Calu3 (cell line): ENCODE measurements at regions of chr2 and their contacts with region 1.

Region 1: GRCh38 chr2:43611987-43612894 is 16.4 kb upstream of the THADA start:
- DNase-seq: peak; percentile 82
- H3K4me3 Mint-ChIP-seq: no peak overlapping the region
- H3K27ac Mint-ChIP-seq: peak overlapping the region; percentile 17
- H3K4me1 Mint-ChIP-seq: peaks cover 10% of the 10 kb centered on the region
- H3K27me3 Mint-ChIP-seq: no peaks in the 10 kb centered on the region
- CTCF ChIP-seq: peak; percentile 75

Region 2: DNA sequence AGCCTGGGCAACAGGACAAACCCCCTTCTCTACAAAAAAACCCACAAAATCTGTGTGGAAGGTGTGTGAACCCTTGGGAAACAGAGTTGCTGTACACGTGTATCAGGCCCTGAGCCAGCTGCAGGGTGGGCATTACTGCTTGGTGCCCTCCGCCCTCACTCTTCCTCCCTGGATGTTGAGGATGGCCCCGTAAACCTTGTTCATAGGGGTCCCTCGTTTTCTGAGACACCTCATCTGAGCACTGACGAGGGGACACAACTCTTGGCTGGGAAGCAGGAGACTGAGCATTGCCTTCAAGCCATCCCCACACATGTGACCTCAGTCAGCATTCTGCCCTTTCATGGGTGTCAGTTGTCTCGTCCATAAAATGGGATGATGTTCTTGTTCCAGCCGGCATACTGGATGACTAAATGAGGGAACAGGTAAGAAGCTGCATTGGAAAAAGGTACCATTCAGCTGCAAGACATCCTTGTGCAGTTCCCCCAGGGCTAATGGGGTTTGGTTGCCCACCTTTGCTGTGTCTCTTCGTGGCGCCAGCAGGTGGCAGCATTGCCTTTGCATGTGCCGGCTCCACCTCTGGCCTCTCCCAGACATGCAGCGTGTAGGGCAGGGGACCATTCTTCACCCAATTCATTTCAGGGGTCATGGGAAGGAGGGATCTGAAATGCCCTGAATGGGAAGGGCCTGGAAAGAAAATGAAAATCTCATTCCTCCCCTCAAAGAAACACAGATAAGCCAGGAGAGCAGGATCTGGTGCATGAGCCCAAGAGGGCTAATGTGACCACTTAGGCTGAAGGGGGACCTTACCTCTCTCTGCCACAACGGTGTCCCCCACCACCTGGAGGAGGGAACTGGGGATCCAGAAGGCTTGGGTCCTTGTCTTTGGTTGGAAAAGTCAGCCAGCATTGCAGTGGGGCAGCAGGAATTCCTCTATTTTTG is 783.5 kb before region 1 on chr2:
- CTCF ChIA-PET with region 1: no interaction called
- intact Hi-C with region 1: loop called (anchors 2 kb)
- DNase-seq: peak; percentile 82
- H3K4me3 Mint-ChIP-seq: no peak overlapping the region
- H3K27ac Mint-ChIP-seq: no peak overlapping the region
- H3K4me1 Mint-ChIP-seq: peaks cover 27% of the 10 kb centered on the region
- H3K27me3 Mint-ChIP-seq: no peaks in the 10 kb centered on the region
- CTCF ChIP-seq: peak; percentile 90

Region 3: DNA sequence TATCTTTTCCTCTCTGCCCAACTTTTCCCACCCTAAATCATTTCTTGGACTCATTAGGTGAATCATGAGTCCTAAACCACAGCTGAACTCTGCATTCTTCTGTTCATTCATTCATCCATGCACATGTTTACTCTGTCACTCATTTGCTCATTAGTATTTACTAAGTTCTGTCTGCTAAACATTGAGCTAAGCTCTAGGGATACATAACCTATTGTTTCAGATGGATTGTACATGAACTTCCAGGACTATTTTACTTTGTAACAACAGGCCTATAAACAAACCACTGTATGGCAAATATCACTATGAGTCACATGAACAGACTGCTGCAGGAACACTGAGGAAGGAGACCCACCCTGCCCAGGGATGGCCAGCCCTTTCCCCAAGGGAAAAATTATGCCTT is 147.0 kb after region 1 on chr2:
- CTCF ChIA-PET with region 1: no interaction called
- intact Hi-C with region 1: loop called (anchors 10 kb)
- DNase-seq: peak; percentile 13
- H3K4me3 Mint-ChIP-seq: no peak overlapping the region
- H3K27ac Mint-ChIP-seq: peak overlapping the region; percentile 61
- H3K4me1 Mint-ChIP-seq: peaks cover 23% of the 10 kb centered on the region
- H3K27me3 Mint-ChIP-seq: no peaks in the 10 kb centered on the region
- CTCF ChIP-seq: no peak

Region 4: GRCh38 chr2:43773876-43774613 is 161.8 kb after region 1 on chr2 and contains the start of gene DYNC2LI1:
- CTCF ChIA-PET with region 1: no interaction called
- intact Hi-C with region 1: no loop called
- DNase-seq: peak; percentile 89
- H3K4me3 Mint-ChIP-seq: peak within 1 kb of the TSS; percentile 98
- H3K27ac Mint-ChIP-seq: peak within 1 kb of the TSS; percentile 98
- H3K4me1 Mint-ChIP-seq: no peaks in the 10 kb centered on the region
- H3K27me3 Mint-ChIP-seq: no peaks in the 10 kb centered on the region
- CTCF ChIP-seq: no peak
- total RNA-seq, gene DYNC2LI1: 20.0 and 24.0 TPM in 2 replicates

Region 5: GRCh38 chr2:43887176-43887575 is 274.9 kb after region 1 on chr2:
- CTCF ChIA-PET with region 1: no interaction called
- intact Hi-C with region 1: loop called (anchors 10 kb)
- DNase-seq: no peak
- H3K4me3 Mint-ChIP-seq: no peak overlapping the region
- H3K27ac Mint-ChIP-seq: no peak overlapping the region
- H3K4me1 Mint-ChIP-seq: no peaks in the 10 kb centered on the region
- H3K27me3 Mint-ChIP-seq: no peaks in the 10 kb centered on the region
- CTCF ChIP-seq: no peak